Activated CD4-positive, alpha-beta T cell treated with anti-CD3 and anti-CD28 coated beads, Interleukin-2, amount 10 ng/mL, durations not matched to agents 24 days and 14 days (primary cell): ENCODE measurements at regions of chr9 and their contacts with region 1.

Region 1: GRCh38 chr9:123338710-123339665 is 17.0 kb upstream of the CRB2 start:
- DNase-seq: peak; percentile 89
- H3K4me3 Mint-ChIP-seq: peak overlapping the region; percentile 80
- H3K27ac Mint-ChIP-seq: peak overlapping the region; percentile 97
- H3K4me1 Mint-ChIP-seq: peaks cover 43% of the 10 kb centered on the region
- H3K27me3 Mint-ChIP-seq: no peaks in the 10 kb centered on the region

Region 2: DNA sequence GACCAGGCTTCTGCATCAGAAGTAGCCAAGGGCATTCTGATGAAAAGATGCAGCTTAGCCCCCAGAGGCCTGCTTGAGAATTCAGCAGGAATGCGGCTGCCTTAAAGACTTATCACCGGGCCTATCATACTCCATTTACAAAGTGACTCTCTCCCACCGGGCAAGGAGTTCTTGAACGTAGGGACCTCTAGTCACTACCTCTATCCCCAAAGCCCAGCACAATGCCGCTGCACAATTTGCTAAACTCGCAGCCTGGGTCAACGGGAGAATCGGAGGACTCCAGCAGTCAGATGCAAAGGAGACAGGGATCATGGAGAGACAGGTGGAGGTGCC is 511.3 kb before region 1 on chr9:
- intact Hi-C with region 1: loop called (anchors 5 kb)
- DNase-seq: no peak
- H3K4me3 Mint-ChIP-seq: peak overlapping the region; percentile 93
- H3K27ac Mint-ChIP-seq: peak overlapping the region; percentile 94
- H3K4me1 Mint-ChIP-seq: peaks cover 23% of the 10 kb centered on the region
- H3K27me3 Mint-ChIP-seq: no peaks in the 10 kb centered on the region

Region 3: GRCh38 chr9:123091459-123091858 is 247.5 kb before region 1 on chr9:
- intact Hi-C with region 1: no loop called
- DNase-seq: no peak
- H3K4me3 Mint-ChIP-seq: no peak overlapping the region
- H3K27ac Mint-ChIP-seq: no peak overlapping the region
- H3K4me1 Mint-ChIP-seq: no peaks in the 10 kb centered on the region
- H3K27me3 Mint-ChIP-seq: no peaks in the 10 kb centered on the region

Region 4: DNA sequence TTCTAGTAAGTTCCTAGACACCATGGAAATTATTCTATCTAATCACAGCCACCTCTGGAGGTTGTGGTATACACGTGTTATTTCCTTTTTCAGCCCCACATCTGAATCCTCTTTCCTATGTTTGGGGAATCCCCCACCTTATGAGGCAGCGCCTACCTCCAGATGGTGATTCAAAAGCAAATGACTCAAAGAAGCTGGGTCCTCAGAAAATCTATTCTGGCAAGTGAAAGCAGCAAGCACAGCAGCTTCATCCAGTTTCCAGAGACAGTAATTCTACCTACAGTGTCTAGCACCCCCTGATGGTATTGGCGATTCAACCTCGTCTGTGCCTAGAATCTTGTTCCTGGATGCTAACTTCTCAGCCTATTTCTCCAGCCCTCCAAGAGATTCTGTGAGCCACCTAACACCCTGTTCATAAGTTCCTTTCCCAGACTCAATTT is 113.6 kb before region 1 on chr9:
- intact Hi-C with region 1: loop called (anchors 1 kb)
- DNase-seq: peak; percentile 85
- H3K4me3 Mint-ChIP-seq: peak overlapping the region; percentile 54
- H3K27ac Mint-ChIP-seq: peak overlapping the region; percentile 78
- H3K4me1 Mint-ChIP-seq: peaks cover 21% of the 10 kb centered on the region
- H3K27me3 Mint-ChIP-seq: peaks cover 2% of the 10 kb centered on the region

Region 5: DNA sequence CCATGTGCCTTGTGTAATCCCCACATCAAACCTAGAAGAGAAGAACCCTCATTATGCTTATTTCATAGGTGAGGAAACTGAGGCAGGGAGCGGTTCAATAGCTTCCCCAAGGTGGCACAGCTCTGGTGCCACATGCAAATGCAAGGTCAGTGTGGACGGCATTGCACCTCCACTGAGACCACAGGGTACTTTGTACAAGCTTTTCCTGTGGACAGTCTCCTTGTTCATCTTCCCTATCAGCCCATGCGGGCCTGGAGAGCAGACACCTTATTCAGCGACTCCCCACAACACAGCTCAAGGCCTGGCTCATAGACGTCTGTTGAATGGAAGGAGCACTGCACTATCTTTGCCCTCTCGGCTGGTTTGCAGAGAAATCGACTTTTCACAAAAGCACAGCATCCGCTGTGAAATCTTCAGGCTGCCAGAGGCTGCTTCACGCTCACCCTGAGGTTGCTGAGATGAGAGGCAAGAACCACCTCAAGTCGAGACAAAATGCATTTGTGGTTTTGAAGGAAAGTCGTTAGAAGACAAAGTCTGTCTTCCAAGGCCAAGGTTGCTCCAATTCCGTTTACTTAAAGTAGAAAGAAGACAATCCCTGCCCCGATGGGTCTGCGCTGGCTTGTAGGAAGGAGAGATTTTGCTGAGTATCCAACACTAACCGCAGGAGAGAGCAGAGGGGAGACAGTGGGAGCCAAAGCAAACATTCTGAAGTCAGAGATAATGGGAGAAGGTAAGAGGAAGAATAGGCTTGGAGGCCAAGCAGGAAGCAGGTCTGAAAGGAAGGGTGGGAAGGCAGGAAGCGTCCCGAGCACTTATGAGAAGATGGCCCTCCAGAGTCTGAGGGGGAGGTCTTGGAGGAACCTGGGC is 36.4 kb before region 1 on chr9:
- intact Hi-C with region 1: loop called (anchors 1 kb)
- DNase-seq: peak; percentile 73
- H3K4me3 Mint-ChIP-seq: peak overlapping the region; percentile 20
- H3K27ac Mint-ChIP-seq: no peak overlapping the region
- H3K4me1 Mint-ChIP-seq: peaks cover 22% of the 10 kb centered on the region
- H3K27me3 Mint-ChIP-seq: no peaks in the 10 kb centered on the region

Region 6: GRCh38 chr9:123349691-123350480 is 10.9 kb after region 1 on chr9:
- intact Hi-C with region 1: loop called (anchors 1 kb)
- DNase-seq: peak; percentile 92
- H3K4me3 Mint-ChIP-seq: no peak overlapping the region
- H3K27ac Mint-ChIP-seq: no peak overlapping the region
- H3K4me1 Mint-ChIP-seq: peaks cover 6% of the 10 kb centered on the region
- H3K27me3 Mint-ChIP-seq: peaks cover 6% of the 10 kb centered on the region